ENCODE measurements at regions of chr4 and their contacts with region 1.

Region 1: DNA sequence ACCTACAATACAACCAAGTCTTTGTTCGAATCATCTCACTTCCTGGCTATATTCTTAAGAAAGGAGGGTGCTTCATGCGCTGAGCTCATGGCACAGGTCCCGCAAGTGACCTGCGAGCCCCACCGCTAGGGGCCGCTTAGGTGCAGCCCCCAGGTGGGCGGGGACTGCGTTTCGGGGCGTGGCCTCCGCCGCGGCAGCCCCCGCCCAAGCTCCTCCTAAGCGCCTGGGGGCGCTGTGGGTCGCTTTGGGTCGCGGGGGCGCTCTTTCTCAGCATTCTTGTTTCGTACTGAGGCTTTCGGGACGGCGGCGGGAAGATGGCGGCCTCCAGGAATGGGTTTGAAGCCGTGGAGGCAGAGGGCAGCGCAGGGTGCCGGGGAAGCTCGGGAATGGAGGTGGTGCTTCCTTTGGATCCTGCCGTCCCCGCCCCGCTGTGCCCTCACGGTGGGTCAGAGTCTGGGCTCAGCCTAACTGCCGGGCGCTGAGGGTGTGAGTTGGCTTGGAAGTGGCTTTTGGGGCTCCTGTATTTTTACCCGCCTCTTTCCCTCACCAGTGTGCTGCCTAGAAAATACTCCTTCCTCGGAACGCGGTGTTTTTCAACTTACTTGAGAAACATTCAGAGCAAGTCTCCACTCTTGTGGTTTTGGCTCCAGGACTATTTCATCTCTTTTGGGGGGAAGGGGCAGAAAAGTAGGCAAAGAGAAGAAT is at the start of gene ZCCHC4:
- DNase-seq: peak; percentile 95
- ATAC-seq: peak; percentile 99
- H3K4me3 Mint-ChIP-seq: peak within 1 kb of the TSS; percentile 98
- H3K27ac Mint-ChIP-seq: peak within 1 kb of the TSS; percentile 95
- H3K4me1 Mint-ChIP-seq: peaks cover 45% of the 10 kb centered on the region
- H3K27me3 Mint-ChIP-seq: no peaks in the 10 kb centered on the region
- CTCF ChIP-seq: peak; percentile 90
- total RNA-seq, gene ZCCHC4: 14.7 and 19.1 TPM in 2 replicates

Region 2: DNA sequence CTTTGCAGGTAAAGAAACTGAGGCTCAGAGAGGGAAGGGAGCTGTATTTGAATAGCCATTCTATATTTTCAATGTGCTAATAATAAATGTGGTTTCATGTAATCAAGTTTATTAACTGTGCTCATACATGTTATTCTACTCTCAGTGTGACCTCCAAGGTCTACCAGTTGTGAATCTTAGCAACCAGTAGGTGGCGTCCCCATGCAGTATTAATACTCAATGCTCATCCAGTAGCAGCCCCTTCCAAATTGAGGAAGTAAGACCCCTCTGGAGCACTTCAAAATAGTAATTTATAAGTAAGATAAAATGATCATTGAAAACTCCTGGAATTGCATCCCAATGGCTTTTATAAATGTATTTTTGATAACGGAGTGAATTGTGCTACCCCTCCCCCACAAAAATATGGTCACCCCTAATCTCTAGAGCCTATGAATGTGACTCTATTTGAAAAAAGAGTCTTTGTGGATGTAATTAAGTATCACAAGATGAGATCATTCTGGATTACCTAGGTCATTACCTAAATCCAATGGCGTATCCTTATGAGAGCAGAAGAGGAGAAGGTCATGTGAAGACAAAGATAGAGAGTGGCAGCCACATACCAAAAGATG is 132.0 kb before region 1 on chr4:
- CTCF ChIA-PET with region 1: interaction called, 9 read pairs
- POLR2A ChIA-PET with region 1: no interaction called
- intact Hi-C with region 1: loop called (anchors 1 kb)
- DNase-seq: no peak
- ATAC-seq: peak; percentile 82
- H3K4me3 Mint-ChIP-seq: no peak overlapping the region
- H3K27ac Mint-ChIP-seq: no peak overlapping the region
- H3K4me1 Mint-ChIP-seq: no peaks in the 10 kb centered on the region
- H3K27me3 Mint-ChIP-seq: no peaks in the 10 kb centered on the region
- CTCF ChIP-seq: no peak

Region 3: DNA sequence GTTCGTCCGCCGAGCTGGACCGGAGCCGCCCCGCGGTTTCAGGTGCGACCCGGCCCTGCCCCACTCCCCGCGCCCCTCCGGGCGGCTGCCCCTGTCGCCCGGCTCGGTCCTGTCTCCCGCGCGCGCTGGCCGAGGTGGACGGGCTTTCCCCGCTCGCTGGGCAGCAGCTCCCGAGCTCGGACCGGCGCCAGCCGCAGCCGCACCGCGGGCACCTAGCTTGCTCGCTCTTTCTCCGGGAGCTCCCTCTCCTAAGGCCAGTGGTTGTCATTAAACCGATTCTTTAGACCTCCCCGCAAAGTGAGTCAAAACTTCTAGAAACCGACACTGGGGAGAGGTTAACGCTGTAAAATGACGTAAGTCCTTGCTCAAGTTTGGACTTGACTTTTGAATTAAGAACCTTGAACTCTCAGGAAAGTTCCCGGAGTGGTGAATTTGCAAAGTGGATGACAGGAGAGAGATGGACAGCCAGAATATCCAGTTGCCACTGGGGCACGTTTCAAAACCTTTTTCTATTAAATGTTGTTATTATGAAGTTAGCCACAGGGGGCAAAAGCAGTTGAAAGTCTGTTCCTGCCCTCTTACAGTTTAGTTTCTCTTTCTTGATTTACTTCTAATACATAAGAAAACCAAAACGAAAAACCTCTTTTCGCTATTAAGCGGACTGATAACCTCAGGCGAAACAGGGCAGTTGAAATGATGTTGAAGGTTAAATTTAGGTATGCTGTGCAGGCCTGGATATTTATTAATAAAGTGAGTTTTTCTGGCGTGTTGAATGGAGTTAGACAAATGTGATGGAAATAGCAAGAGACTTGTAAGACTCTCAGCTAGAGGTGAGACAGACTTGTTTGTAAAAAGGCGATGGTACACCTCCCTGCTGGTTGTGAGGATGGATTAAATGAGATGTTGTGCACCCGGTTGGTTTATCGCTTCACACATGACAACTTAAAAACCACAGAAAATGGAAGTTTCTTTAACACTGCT is 78.0 kb before region 1 on chr4:
- CTCF ChIA-PET with region 1: interaction called, 45 read pairs
- POLR2A ChIA-PET with region 1: interaction called, 48 read pairs
- intact Hi-C with region 1: loop called (anchors 1 kb)
- DNase-seq: no peak
- ATAC-seq: peak; percentile 53
- H3K4me3 Mint-ChIP-seq: peak overlapping the region; percentile 90
- H3K27ac Mint-ChIP-seq: peak overlapping the region; percentile 95
- H3K4me1 Mint-ChIP-seq: peaks cover 47% of the 10 kb centered on the region
- H3K27me3 Mint-ChIP-seq: no peaks in the 10 kb centered on the region
- CTCF ChIP-seq: no peak

Region 4: GRCh38 chr4:25376754-25377571 is 64.3 kb after region 1 on chr4 and contains the start of gene ANAPC4:
- CTCF ChIA-PET with region 1: interaction called, 7 read pairs
- POLR2A ChIA-PET with region 1: interaction called, 21 read pairs
- intact Hi-C with region 1: loop called (anchors 1 kb)
- DNase-seq: peak; percentile 95
- ATAC-seq: peak; percentile 94
- H3K4me3 Mint-ChIP-seq: no peak within 1 kb of the TSS
- H3K27ac Mint-ChIP-seq: peak within 1 kb of the TSS; percentile 81
- H3K4me1 Mint-ChIP-seq: peaks cover 5% of the 10 kb centered on the region
- H3K27me3 Mint-ChIP-seq: no peaks in the 10 kb centered on the region
- CTCF ChIP-seq: no peak
- total RNA-seq, gene ANAPC4: 36.8 and 37.0 TPM in 2 replicates

Measured in activated B cell treated with CpG ODN at 0.5 μM for 24 hours (primary cell).